ENCODE measurements at regions of chr6 and their contacts with region 1.

Region 1: DNA sequence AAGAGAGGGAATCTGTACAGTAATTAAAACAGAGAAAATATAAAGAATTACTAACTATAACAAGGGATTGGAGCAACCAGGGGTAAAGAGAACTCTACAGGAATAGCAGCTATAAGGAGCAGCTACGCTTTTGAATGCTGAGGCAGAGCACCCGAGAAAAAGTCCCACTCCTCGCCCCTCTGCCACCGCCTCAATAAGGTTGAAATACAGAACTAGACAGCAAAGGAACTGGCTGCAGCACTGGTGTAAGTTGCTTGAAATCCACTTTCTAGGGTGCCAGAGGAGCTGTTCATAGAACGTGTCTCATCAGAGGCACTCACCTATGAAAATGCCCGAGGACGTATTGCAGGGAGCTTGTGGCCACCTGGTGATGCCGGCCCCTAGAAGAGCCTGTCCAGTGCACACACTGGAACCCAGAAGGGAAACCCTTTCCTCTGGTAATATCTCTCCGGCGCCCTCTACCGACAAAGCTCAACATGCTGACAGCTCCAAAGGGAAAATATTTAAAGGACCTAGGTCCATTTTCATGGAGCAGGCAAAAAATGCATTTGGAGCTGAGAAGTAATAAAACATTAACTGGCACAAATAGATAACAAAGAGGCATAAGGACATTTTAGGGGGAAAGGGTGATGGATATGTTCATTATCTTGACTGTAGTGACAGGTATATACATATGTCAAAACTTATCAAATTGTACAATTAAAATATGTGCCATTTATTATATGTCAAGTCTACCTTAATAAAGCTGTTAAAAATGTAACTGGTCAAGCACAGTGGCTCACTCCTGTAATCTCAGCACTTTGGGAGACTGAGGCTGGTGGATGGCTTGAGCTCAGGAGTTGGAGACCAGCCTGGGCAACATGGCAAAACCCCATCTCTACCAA is 137.4 kb upstream of the HDAC2 start:
- DNase-seq: peak; percentile 88

Region 2: GRCh38 chr6:113970805-113971676 is 137.3 kb before region 1 on chr6 and contains the start of gene HDAC2:
- intact Hi-C with region 1: loop called in 1 of 2 experiments (anchors 10 kb)
- DNase-seq: peak; percentile 95
- total RNA-seq, gene HDAC2: 54.5 to 63.6 TPM

Region 3: DNA sequence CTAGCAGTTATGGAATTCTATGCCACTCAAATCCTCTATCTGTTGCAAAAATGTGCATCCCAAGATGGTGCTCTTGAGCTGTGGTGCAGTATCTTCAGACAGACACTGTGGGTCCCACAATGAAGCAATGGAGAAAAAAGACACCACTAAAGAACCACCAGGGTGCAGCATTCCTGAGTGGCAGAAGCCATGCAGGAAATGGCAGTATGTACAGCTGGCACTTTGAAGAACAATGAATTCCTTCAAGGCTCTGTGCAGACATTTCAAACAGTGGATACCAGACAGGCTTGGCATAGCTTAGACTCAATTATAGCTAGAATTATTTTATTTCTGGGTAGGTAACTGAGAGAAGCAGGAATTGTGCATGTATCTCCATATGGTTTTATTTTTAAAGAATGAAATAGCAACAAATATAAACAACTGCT is 113.4 kb before region 1 on chr6:
- intact Hi-C with region 1: loop called in 1 of 2 experiments (anchors 5 kb)
- DNase-seq: no peak

Region 4: DNA sequence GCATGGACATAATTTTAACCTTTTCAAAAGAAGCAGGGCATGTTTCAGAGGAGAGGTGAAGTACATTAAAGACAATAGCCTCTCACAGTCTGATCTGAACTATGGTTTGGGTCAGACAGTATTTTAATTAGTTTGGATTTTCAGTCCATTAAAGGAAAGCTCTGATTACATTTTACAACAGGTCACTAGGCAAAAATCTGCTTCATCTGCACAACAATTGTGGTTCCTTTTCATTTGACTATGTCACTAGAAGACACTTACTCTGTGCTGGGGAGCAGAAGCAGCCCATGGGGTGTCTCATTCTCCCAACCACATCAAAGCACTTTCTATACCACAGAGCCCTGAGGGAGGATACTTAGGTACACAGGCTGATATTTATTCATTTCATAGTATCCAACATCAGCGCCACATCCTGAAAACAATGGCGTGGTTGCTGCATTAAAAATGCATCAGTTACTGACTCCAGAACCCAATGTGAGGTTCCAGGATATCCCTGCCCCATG is 100.9 kb before region 1 on chr6:
- intact Hi-C with region 1: no loop called
- DNase-seq: no peak